GM12878 (cell line): ENCODE measurements at regions of chr17 and their contacts with region 1.

Region 1: DNA sequence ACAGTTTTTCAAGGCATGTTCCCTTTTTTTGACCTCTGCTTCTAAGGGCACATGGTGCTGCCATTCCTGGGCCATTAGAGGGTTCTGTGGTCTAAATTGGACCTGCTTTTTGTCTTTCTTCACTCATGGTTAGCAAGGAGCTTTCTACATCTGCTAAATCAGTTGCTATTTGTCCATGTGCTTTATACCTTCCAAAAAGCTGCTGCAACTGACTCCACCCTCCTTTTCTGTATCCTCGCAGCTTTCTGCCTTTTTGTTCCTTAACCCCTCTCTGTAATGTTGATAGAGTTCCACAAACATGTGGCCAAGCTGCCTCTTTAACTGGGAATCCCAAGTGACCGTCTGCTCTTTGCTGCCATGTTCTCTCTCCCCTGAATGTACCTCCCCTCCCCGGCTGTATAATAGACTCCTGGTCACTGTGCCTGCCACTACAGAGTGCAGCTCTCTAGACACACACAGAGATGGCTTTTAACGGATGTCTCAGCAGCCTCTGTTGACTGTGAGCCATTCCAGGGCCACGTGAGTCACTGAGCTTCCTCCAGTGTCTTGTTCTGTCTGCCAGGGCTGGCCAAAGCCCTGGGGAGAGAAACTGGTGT is 57.4 kb upstream of the TEKT3 start:
- DNase-seq: no peak
- ATAC-seq: no peak
- H3K4me3 ChIP-seq: no peak overlapping the region
- H3K27ac ChIP-seq: no peak overlapping the region
- H3K4me1 ChIP-seq: no peaks in the 10 kb centered on the region
- H3K27me3 ChIP-seq: no peaks in the 10 kb centered on the region
- CTCF ChIP-seq: no peak
- EP300 ChIP-seq: no peak
- POLR2A ChIP-seq: no peak
- RAD21 ChIP-seq: no peak

Region 2: DNA sequence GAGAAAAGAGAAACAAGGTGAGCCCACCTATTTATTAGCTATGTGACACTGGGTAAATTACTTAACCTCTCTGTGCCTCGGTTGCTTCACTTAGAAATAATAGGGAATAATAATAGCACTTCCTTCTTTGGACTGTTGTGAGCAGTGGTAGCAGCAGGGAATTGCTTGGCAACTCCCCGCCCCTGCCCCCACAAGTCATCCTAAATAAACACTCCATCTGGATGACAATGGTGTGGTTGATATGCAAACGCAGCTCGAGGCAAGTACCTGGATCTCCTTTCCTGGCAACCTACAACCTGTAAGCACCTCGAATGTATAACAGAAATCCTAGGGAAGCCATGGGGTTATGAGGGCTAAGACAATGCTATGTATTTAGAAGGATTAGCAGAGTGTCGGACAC is 66.5 kb before region 1 on chr17:
- CTCF ChIA-PET with region 1: no interaction called
- POLR2A ChIA-PET with region 1: no interaction called
- RAD21 ChIA-PET with region 1: no interaction called
- SMC1A ChIA-PET with region 1: no interaction called
- in situ Hi-C with region 1: no loop called
- intact Hi-C with region 1: loop called (anchors 10 kb)
- DNase-seq: no peak
- ATAC-seq: no peak
- H3K4me3 ChIP-seq: no peak overlapping the region
- H3K27ac ChIP-seq: no peak overlapping the region
- H3K4me1 ChIP-seq: no peaks in the 10 kb centered on the region
- H3K27me3 ChIP-seq: no peaks in the 10 kb centered on the region
- CTCF ChIP-seq: no peak
- EP300 ChIP-seq: no peak
- POLR2A ChIP-seq: no peak
- RAD21 ChIP-seq: no peak

Region 3: GRCh38 chr17:15348021-15348420 is 50.8 kb before region 1 on chr17:
- CTCF ChIA-PET with region 1: no interaction called
- POLR2A ChIA-PET with region 1: no interaction called
- RAD21 ChIA-PET with region 1: no interaction called
- SMC1A ChIA-PET with region 1: no interaction called
- in situ Hi-C with region 1: loop called (anchors 5 kb)
- intact Hi-C with region 1: no loop called
- DNase-seq: no peak
- ATAC-seq: no peak
- H3K4me3 ChIP-seq: no peak overlapping the region
- H3K27ac ChIP-seq: no peak overlapping the region
- H3K4me1 ChIP-seq: no peaks in the 10 kb centered on the region
- H3K27me3 ChIP-seq: no peaks in the 10 kb centered on the region
- CTCF ChIP-seq: no peak
- EP300 ChIP-seq: no peak
- POLR2A ChIP-seq: no peak
- RAD21 ChIP-seq: no peak

Region 4: GRCh38 chr17:15782866-15783265 is 384.0 kb after region 1 on chr17:
- CTCF ChIA-PET with region 1: no interaction called
- POLR2A ChIA-PET with region 1: no interaction called
- RAD21 ChIA-PET with region 1: no interaction called
- SMC1A ChIA-PET with region 1: no interaction called
- in situ Hi-C with region 1: no loop called
- intact Hi-C with region 1: no loop called
- DNase-seq: no peak
- ATAC-seq: no peak
- H3K4me3 ChIP-seq: no peak overlapping the region
- H3K27ac ChIP-seq: no peak overlapping the region
- H3K4me1 ChIP-seq: no peaks in the 10 kb centered on the region
- H3K27me3 ChIP-seq: no peaks in the 10 kb centered on the region
- CTCF ChIP-seq: no peak
- EP300 ChIP-seq: no peak
- POLR2A ChIP-seq: no peak
- RAD21 ChIP-seq: no peak

Region 5: GRCh38 chr17:15892731-15893657 is 494.2 kb after region 1 on chr17:
- CTCF ChIA-PET with region 1: no interaction called
- POLR2A ChIA-PET with region 1: no interaction called
- RAD21 ChIA-PET with region 1: no interaction called
- SMC1A ChIA-PET with region 1: no interaction called
- in situ Hi-C with region 1: no loop called
- intact Hi-C with region 1: no loop called
- DNase-seq: no peak
- ATAC-seq: peak; percentile 74
- H3K4me3 ChIP-seq: no peak overlapping the region
- H3K27ac ChIP-seq: no peak overlapping the region
- H3K4me1 ChIP-seq: no peaks in the 10 kb centered on the region
- H3K27me3 ChIP-seq: no peaks in the 10 kb centered on the region
- CTCF ChIP-seq: no peak
- EP300 ChIP-seq: no peak
- POLR2A ChIP-seq: no peak
- RAD21 ChIP-seq: no peak